GM12878 (cell line): ENCODE measurements at regions of chr7 and their contacts with region 1.

Region 1: DNA sequence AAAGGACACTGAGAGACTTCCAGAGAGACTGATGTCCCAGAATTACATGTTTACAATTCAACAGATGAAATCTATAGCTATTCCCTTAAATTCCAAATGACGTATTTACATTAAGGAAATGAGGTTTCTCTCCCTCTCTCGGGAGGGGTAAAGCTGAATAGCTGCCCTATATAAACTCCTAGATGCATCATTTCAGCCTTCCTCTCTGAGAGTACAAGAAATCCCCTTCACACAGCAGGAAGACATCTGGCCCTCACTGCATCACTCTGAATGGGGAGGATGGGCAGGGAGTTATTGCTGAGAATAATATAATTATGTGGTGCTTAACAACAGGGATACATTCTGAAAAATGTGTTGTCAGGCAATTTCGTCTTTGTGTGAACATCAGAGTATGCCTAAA is 11.0 kb downstream of the POT1 start:
- DNase-seq: no peak
- ATAC-seq: peak; percentile 84
- H3K4me3 ChIP-seq: no peak overlapping the region
- H3K27ac ChIP-seq: peak overlapping the region; percentile 56
- H3K4me1 ChIP-seq: peaks cover 20% of the 10 kb centered on the region; the same call in 1 of the 2 replicates
- H3K27me3 ChIP-seq: no peaks in the 10 kb centered on the region
- CTCF ChIP-seq: no peak
- EP300 ChIP-seq: 0 out of 4 replicates have a peak, but pooled peaks have one; percentile 27 to 32
- POLR2A ChIP-seq: no peak
- RAD21 ChIP-seq: no peak

Region 2: DNA sequence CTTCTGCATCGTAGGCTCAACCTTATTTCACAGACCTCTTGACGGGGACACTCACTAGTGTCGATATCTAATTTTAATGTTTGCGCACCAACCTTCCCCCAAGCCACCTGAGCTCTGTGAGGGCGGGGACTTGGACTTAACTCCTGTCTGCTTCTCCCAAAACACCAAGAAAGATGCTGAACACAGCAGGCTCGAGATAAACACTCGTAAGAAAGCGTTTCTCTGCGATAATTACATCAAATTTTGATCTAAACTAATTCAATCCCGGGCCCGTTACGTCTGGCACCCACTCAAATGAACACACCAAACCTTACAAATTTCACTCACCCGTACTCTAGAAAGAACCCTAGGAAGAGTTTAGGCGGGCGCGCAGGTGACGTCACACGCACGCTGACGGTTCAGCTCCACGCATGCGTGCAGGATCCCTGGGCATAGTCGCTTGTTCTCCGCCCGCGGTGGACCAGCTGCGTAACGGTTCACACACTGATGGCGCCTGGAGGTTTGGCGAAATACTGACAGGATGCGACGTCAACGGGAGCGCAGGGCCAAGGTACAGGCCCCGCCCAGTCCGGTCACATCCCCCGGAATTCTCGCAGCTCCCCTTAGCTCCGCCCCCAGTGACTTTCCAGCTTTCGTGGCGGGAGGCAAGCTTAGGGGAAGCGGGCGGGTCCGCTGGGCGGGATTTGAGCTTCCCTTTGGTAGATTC is 11.0 kb after region 1 on chr7 and contains the start of gene POT1:
- CTCF ChIA-PET with region 1: interaction called, 13 read pairs
- POLR2A ChIA-PET with region 1: interaction called, 10 read pairs
- RAD21 ChIA-PET with region 1: interaction called, 7 read pairs
- SMC1A ChIA-PET with region 1: interaction called, 56 read pairs
- in situ Hi-C with region 1: no loop called
- intact Hi-C with region 1: no loop called
- DNase-seq: peak; percentile 96
- ATAC-seq: peak; percentile 98
- H3K4me3 ChIP-seq: peak within 1 kb of the TSS; percentile 88
- H3K27ac ChIP-seq: peak within 1 kb of the TSS; percentile 74
- H3K4me1 ChIP-seq: no peaks in the 10 kb centered on the region; the same call in 1 of the 2 replicates
- H3K27me3 ChIP-seq: no peaks in the 10 kb centered on the region
- CTCF ChIP-seq: no peak
- EP300 ChIP-seq: 0 out of 4 replicates have a peak, but pooled peaks of 1 of the 2 experiments have one; percentile 50
- POLR2A ChIP-seq: peak; percentile 77
- RAD21 ChIP-seq: no peak
- polyA plus RNA-seq, gene POT1: 16.3 to 17.1 TPM

Region 3: GRCh38 chr7:124959676-124960075 is 41.0 kb after region 1 on chr7:
- CTCF ChIA-PET with region 1: no interaction called
- POLR2A ChIA-PET with region 1: no interaction called
- RAD21 ChIA-PET with region 1: no interaction called
- SMC1A ChIA-PET with region 1: no interaction called
- in situ Hi-C with region 1: no loop called
- intact Hi-C with region 1: no loop called
- DNase-seq: no peak
- ATAC-seq: no peak
- H3K4me3 ChIP-seq: no peak overlapping the region
- H3K27ac ChIP-seq: no peak overlapping the region
- H3K4me1 ChIP-seq: no peaks in the 10 kb centered on the region
- H3K27me3 ChIP-seq: no peaks in the 10 kb centered on the region
- CTCF ChIP-seq: no peak
- EP300 ChIP-seq: no peak
- POLR2A ChIP-seq: no peak
- RAD21 ChIP-seq: no peak

Region 4: GRCh38 chr7:125195156-125195555 is 276.5 kb after region 1 on chr7:
- CTCF ChIA-PET with region 1: no interaction called
- POLR2A ChIA-PET with region 1: no interaction called
- RAD21 ChIA-PET with region 1: no interaction called
- SMC1A ChIA-PET with region 1: no interaction called
- in situ Hi-C with region 1: no loop called
- intact Hi-C with region 1: no loop called
- DNase-seq: no peak
- ATAC-seq: no peak
- H3K4me3 ChIP-seq: no peak overlapping the region
- H3K27ac ChIP-seq: no peak overlapping the region
- H3K4me1 ChIP-seq: no peaks in the 10 kb centered on the region
- H3K27me3 ChIP-seq: no peaks in the 10 kb centered on the region
- CTCF ChIP-seq: no peak
- EP300 ChIP-seq: no peak
- POLR2A ChIP-seq: no peak
- RAD21 ChIP-seq: no peak